Sciatic nerve (tissue), 2 donors: ENCODE measurements at regions of chr3 and their contacts with region 1.

Region 1: DNA sequence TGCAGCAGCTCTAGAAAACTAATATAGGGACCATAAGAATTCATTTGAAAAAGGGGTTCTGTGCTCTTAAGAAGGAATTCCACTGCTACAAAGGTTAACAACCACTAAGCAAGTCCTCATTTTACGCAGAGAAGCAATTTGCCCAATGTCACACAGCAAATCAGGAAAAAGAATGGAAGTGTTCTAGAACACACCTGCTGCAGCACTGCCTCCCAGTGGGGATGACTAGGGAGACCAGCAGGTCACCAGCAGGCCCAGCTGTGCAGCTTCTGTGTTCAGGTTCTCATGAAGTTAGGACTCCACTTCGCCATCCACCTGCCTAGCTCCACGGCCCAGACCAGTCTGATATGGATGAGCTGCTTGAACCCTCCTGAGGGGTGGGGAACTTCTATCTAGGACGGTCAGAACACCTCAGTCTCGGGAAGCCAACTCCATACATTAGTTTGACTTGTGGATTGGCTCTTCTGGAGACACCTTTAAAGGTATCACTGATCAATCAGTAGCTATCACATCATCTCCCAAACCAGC is 18.6 kb downstream of the POMGNT2 start:
- DNase-seq: no peak
- ATAC-seq: peak; percentile 32

Region 2: GRCh38 chr3:42961633-42962032 is 125.7 kb before region 1 on chr3:
- intact Hi-C with region 1: loop called (anchors 5 kb)
- DNase-seq: no peak
- ATAC-seq: peak; percentile 75

Region 3: DNA sequence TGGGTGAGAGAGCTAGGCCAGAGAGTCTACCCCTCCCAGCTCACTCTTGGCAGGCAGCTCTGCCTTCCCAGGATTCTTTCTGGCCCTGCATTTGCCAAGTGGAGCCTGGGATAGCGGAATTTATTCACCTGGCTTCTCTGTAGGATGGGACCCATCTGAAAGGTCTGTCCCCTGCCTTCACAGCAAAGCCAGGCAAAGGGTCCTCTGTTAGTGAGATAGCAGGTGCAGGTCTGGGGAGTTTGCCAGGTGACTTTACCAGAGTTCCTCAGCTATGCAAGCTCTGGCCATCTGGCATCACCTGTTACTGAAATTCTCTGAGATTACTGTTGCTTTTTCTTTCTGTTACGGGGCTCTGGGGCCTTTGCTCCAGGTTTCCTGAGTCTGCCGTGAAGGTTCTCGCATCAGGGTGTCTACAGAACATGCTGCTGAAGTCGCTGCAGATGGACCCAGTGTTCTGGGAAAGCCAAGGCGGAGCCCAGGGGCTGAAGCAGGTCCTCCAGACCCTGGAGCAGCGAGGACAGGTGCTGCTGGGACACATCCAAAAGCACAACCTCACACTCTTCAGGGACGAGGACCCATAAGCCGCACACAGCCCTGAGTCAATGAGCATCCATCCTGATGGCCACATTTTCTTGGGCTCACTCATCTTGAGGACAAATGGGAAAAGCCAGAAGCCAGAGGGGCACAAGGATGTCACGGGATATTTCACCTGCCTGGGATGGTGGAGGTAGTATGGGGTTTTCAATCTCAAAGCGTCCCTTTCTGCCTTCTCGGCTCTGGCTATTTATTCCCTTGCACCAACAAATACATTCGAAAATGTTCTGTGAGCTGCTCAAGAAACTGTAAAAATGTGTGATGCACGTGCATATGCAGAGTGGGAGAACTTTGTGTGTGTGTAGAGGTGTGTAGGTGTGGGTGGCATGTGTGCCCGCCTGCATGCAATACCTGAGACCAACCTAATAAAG is 31.2 kb before region 1 on chr3:
- intact Hi-C with region 1: loop called (anchors 2 kb)
- DNase-seq: no peak
- ATAC-seq: no peak